ENCODE measurements at regions of chr5 and their contacts with region 1.

Region 1: DNA sequence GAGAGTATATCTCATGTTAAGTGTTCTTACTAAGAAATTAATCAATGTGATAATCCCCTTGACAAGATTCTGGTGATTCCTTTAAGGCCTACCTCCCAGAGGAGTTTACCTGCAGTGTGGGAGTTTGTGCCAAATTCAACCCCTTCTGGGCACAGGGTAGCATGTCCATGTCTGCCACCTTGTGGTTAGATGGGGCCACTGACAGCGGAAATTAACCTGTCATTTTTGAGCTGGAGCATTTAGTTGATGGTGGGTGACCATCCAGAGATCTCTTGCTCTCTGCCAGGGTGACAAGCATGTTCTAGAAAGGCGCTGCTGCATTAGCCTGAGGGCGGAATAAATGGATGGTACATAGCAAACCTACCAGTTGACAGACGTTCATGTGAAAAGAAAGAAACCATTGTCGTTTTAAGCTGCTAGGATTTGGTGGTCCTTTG is 132.2 kb downstream of the FBXO4 start:
- DNase-seq: peak; percentile 60
- H3K27ac ChIP-seq: no peak overlapping the region
- CTCF ChIP-seq: peak; percentile 83

Region 2: DNA sequence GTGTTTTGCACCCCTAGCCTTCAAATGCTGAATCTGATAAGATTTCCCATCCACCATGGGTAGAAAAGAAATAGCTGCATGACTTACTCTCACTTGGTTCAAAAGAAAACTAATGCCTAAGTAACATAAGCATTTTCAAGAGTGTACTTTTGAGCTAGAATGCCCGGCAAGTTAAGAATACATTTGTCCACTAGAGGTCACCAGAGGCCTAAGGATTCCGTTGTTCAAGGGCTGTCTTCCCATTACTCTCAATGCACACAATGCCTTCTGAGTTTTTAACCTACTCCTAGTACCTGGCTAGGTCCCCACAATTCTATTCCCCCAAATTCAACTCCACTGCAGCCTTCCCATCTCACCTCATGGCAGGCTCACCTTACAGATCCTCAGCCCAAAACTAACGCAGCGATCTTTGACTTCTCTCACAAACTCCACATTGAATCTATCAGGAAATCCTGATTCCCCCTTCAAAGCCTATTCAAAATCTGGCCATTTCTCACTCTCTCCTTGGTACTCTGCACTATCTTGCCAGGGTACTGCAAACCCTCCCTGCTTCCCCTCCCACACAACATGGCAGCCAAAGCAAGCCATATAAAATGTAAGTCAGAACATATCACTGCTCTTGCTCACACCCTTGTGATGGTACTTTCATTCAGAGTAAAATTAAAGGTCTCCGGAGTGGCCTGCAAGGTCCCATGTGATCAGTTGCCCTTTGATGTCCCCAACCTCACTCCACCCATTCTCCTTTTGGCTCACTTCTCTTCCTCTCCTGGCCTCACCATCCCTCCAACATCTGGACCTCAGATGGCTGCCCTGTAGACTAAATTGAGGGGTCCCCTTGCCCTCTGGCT is 200.4 kb before region 1 on chr5:
- CTCF ChIA-PET with region 1: interaction called, 19 read pairs
- POLR2A ChIA-PET with region 1: no interaction called
- DNase-seq: peak; percentile 65
- H3K27ac ChIP-seq: no peak overlapping the region
- CTCF ChIP-seq: peak; percentile 87

Measured in RWPE1 (cell line).